ENCODE measurements at regions of chr3 and their contacts with region 1.

Region 1: GRCh38 chr3:56801662-56802377 is at the start of gene ARHGEF3:
- DNase-seq: peak; percentile 89
- H3K4me3 Mint-ChIP-seq: peak within 1 kb of the TSS; percentile 90
- H3K27ac Mint-ChIP-seq: peak within 1 kb of the TSS; percentile 76
- H3K4me1 Mint-ChIP-seq: peaks cover 48% of the 10 kb centered on the region
- H3K27me3 Mint-ChIP-seq: no peaks in the 10 kb centered on the region
- total RNA-seq, gene ARHGEF3: 71.3 TPM

Region 2: GRCh38 chr3:56612146-56612545 is 189.7 kb before region 1 on chr3:
- CTCF ChIA-PET with region 1: no interaction called
- POLR2A ChIA-PET with region 1: no interaction called
- DNase-seq: peak; percentile 52
- H3K4me3 Mint-ChIP-seq: peak overlapping the region; percentile 21
- H3K27ac Mint-ChIP-seq: peak overlapping the region; percentile 68
- H3K4me1 Mint-ChIP-seq: peaks cover 72% of the 10 kb centered on the region
- H3K27me3 Mint-ChIP-seq: no peaks in the 10 kb centered on the region

Region 3: GRCh38 chr3:56702490-56703315 is 99.1 kb before region 1 on chr3:
- CTCF ChIA-PET with region 1: interaction called, 247 read pairs
- POLR2A ChIA-PET with region 1: interaction called, 56 read pairs
- DNase-seq: peak; percentile 44
- H3K4me3 Mint-ChIP-seq: no peak overlapping the region
- H3K27ac Mint-ChIP-seq: no peak overlapping the region
- H3K4me1 Mint-ChIP-seq: peaks cover 18% of the 10 kb centered on the region
- H3K27me3 Mint-ChIP-seq: peaks cover 2% of the 10 kb centered on the region

Region 4: GRCh38 chr3:56732109-56732508 is 69.7 kb before region 1 on chr3:
- CTCF ChIA-PET with region 1: interaction called, 19 read pairs
- POLR2A ChIA-PET with region 1: interaction called, 11 read pairs
- DNase-seq: no peak
- H3K4me3 Mint-ChIP-seq: no peak overlapping the region
- H3K27ac Mint-ChIP-seq: peak overlapping the region; percentile 78
- H3K4me1 Mint-ChIP-seq: peaks cover 36% of the 10 kb centered on the region
- H3K27me3 Mint-ChIP-seq: no peaks in the 10 kb centered on the region

Region 5: GRCh38 chr3:56758539-56758981 is 43.3 kb before region 1 on chr3:
- CTCF ChIA-PET with region 1: interaction called, 88 read pairs
- POLR2A ChIA-PET with region 1: interaction called, 95 read pairs
- DNase-seq: peak; percentile 45
- H3K4me3 Mint-ChIP-seq: peak overlapping the region; percentile 13
- H3K27ac Mint-ChIP-seq: peak overlapping the region; percentile 65
- H3K4me1 Mint-ChIP-seq: peaks cover 65% of the 10 kb centered on the region
- H3K27me3 Mint-ChIP-seq: peaks cover 2% of the 10 kb centered on the region

Region 6: DNA sequence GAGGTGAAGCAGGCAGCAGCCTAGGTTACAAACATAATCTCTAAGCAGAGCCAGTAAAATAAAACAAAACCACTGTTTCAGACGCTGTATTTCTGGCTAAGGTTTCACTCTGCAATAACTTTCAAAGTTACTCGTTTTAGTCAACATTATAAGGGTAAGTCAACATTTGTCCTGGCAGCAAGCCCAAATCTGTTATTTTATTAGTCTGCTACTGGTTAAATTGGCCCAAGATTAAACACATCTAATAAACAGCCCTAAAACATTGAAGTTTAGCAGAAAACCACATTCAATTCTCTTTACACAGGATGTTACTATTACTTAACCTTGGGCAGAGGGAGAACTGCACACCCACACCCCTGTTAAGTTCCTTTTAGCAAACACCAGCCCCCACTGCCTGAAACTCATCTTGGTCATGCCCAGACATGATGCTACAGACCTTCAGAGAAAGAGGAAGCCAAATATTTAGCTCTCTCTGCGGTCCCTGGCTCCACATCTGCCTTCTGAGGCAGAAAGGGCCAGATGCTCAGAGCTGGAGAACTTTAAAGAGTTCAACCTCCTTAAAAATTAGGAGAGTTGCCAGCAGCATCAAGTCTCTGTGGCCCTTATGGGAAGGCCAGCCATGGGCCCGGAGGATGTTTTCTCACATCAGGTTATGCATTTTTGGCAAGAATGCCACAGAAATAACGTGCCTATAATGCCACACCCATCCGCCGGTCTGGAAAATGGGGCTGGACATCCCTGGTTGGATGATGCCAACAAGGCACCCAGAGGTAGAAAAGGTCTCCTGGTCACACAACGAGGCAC is 18.0 kb before region 1 on chr3:
- CTCF ChIA-PET with region 1: interaction called, 118 read pairs
- POLR2A ChIA-PET with region 1: interaction called, 168 read pairs
- DNase-seq: peak; percentile 81
- H3K4me3 Mint-ChIP-seq: peak overlapping the region; percentile 57
- H3K27ac Mint-ChIP-seq: peak overlapping the region; percentile 96
- H3K4me1 Mint-ChIP-seq: peaks cover 89% of the 10 kb centered on the region
- H3K27me3 Mint-ChIP-seq: no peaks in the 10 kb centered on the region

Region 7: DNA sequence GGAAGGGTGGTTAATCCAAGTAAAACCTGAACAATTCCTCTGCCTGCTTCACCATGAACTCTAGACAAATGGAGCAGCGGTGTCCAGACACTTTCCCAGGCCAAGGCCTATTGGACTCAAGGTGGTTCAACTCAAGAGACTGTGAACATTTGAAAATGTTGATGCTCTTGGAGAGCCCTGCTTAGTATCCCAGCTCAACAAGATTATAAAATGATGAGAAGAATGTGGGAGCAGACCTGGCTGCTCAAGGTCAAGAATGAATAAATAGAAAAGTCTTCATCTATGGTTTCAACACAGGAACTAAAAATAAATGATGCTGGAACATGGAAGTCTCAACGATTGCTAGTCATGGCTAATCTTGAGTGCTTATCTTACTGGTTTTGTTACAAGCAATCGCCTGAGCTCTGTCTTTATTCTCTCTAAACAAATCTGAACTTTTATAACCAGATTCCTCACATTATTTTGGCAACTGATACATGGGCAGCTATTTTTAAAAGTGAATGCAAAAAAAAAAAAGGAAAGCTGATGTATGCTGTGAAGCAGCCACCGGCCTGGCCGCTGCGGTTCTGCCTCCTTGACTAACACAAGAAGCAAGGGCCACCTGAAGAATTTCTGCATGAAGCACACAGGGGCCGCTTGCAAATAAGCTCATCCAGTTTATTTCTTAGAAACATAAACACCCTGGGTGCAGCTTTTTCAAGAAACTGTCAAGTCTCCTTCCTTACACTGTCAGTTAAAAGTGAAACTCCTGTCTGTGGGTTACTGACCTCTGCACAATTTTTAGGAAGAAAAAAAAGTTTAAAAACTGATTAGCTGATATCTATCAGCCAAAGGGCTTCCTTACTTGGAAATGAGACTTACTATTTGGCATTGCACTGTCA is 120.0 kb after region 1 on chr3:
- CTCF ChIA-PET with region 1: interaction called, 58 read pairs
- POLR2A ChIA-PET with region 1: interaction called, 85 read pairs
- DNase-seq: peak; percentile 55
- H3K4me3 Mint-ChIP-seq: peak overlapping the region; percentile 70
- H3K27ac Mint-ChIP-seq: peak overlapping the region; percentile 94
- H3K4me1 Mint-ChIP-seq: peaks cover 71% of the 10 kb centered on the region
- H3K27me3 Mint-ChIP-seq: no peaks in the 10 kb centered on the region

Region 8: DNA sequence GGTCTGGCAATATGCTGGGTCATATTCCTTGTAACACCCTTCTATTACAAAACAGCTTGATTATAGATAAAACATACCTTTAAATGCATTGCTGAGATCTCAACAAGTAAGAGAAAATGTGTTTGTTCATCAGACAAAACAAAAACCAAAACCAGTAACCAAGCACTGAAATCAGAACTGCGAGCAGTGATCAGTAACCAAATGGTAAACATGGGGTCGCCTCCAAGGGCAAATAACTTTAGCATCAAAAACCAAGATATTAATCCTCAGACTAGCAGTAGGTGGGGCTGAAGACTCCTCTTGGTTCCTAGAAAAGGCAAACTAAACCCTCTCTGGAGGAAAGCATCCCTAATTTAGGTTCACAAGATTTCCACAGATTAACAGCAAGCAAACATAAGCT is 404.6 kb after region 1 on chr3:
- CTCF ChIA-PET with region 1: no interaction called
- POLR2A ChIA-PET with region 1: no interaction called
- DNase-seq: no peak
- H3K4me3 Mint-ChIP-seq: no peak overlapping the region
- H3K27ac Mint-ChIP-seq: no peak overlapping the region
- H3K4me1 Mint-ChIP-seq: no peaks in the 10 kb centered on the region
- H3K27me3 Mint-ChIP-seq: peaks cover 4% of the 10 kb centered on the region